CD4-positive, alpha-beta memory T cell (primary cell): ENCODE measurements at regions of chr9 and their contacts with region 1.

Region 1: DNA sequence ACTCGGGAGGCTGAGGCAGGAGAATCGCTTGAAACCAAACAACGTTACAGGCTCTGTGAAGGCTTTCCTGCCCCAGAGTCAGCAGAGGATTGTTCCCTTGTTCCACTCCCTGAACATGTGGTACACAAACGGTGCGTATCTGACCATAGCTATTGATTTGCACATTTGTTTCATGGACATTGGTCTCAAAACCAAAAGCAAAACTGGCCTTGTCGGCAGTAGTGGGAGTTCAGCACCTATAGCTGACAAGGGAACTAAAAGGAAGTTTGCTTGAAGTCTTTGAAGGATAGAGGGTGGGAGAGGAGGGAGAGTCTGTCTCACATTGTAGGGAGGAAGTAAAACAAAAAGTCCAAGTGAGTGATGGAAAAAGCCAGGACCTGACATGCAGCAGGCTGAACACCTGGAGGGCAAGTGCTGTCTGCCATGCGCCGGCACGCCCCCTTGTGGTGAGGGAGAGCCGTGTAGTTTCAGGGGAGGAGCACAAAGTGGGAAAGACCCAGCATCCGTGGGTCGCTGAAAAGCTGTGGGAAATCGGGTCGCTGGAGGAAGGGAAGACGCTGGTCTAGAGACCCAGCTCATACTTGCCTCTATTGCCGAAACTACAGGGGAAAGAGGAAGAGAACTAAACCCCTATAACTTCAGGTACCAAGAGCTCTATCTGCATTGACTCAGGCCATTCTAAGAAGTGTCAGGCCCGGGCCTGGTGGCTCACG is 58.0 kb downstream of the RAD23B start:
- DNase-seq: peak; percentile 71 to 75 (median 73)
- H3K4me3 ChIP-seq: no peak overlapping the region
- H3K4me3 Mint-ChIP-seq: peak overlapping the region in 2 of 8 donors; percentile 4 to 17
- H3K27ac ChIP-seq: no peak overlapping the region
- H3K27ac Mint-ChIP-seq: peak overlapping the region in 4 of 7 donors; percentile 30 to 89 (median 50)
- H3K4me1 ChIP-seq: peaks cover 10% of the 10 kb centered on the region
- H3K4me1 Mint-ChIP-seq: peaks cover 7 to 17% (median 14%) of the 10 kb centered on the region in 4 donors
- H3K27me3 ChIP-seq: no peaks in the 10 kb centered on the region
- H3K27me3 Mint-ChIP-seq: no peaks in the 10 kb centered on the region

Region 2: DNA sequence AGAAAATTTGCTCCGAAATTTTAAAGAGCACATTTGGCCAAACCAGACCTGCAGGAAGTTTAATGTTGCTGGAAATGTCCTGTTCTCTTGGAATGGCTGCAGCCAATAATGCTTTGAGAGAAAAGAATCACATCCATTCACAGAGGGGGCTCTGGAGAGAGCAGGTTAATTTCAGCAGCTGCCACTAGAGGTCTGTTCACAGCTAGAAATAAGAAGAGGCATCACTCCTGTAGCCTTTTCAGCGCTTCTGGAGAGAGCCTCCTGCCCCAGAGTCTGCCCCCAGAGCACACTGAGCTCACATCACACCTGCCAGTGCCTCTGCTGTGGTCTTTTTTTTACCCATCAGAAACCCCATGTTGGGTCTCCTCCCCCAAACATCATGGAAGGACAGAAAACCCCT is 182.8 kb before region 1 on chr9:
- CTCF ChIA-PET with region 1: interaction called, 8 read pairs
- POLR2A ChIA-PET with region 1: no interaction called
- intact Hi-C with region 1: loop called (anchors 5 kb)
- DNase-seq: no peak
- H3K4me3 ChIP-seq: no peak overlapping the region
- H3K4me3 Mint-ChIP-seq: no peak overlapping the region
- H3K27ac ChIP-seq: no peak overlapping the region
- H3K27ac Mint-ChIP-seq: no peak overlapping the region
- H3K4me1 ChIP-seq: no peaks in the 10 kb centered on the region
- H3K4me1 Mint-ChIP-seq: no peaks in the 10 kb centered on the region
- H3K27me3 ChIP-seq: no peaks in the 10 kb centered on the region
- H3K27me3 Mint-ChIP-seq: peaks cover 4% of the 10 kb centered on the region in 2 donors

Region 3: DNA sequence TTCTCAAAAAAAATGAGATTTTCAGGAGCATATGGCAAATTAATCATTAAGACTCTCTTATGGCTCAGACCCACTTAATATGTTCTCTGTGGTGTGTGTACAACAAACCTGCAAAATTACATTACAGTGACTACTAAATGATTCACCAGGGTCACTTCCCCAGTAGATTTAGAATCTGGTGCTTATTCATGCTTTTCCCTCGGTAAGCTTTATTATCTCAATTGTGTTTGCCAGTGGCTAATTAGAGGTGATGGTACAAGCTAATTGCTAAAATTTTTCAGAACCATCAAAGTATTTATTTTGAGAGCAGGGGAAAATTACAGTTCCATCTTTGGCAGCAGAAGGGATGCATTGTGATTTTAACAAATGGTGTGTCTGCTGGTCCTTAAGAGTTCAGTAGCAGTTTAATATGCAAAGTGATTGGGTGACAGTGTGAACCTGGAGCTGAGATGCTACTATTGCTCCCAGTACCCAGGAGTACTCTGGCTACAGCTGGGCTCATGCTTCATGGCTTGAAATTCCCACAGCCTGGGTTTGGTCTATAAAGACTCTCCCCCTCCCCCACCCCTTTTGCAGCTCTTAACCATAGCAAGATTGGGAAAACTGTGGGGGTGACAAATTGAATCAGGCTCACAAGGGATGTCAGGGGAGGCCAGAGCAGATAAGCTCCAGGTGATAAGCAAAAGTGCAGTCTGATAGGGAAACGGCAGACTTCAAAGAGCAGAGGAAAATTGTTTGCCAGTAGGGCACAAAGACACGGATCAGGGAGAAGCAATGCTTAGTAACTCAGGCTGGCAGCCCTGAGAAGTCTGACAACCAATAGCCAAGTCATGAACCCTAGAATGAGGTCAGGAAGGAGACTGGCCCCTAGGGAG is 150.8 kb before region 1 on chr9:
- CTCF ChIA-PET with region 1: interaction called, 11 read pairs
- POLR2A ChIA-PET with region 1: no interaction called
- intact Hi-C with region 1: no loop called
- DNase-seq: no peak
- H3K4me3 ChIP-seq: no peak overlapping the region
- H3K4me3 Mint-ChIP-seq: no peak overlapping the region
- H3K27ac ChIP-seq: no peak overlapping the region
- H3K27ac Mint-ChIP-seq: no peak overlapping the region
- H3K4me1 ChIP-seq: no peaks in the 10 kb centered on the region
- H3K4me1 Mint-ChIP-seq: no peaks in the 10 kb centered on the region
- H3K27me3 ChIP-seq: no peaks in the 10 kb centered on the region
- H3K27me3 Mint-ChIP-seq: peaks cover 4 to 14% of the 10 kb centered on the region in 2 donors

Region 4: DNA sequence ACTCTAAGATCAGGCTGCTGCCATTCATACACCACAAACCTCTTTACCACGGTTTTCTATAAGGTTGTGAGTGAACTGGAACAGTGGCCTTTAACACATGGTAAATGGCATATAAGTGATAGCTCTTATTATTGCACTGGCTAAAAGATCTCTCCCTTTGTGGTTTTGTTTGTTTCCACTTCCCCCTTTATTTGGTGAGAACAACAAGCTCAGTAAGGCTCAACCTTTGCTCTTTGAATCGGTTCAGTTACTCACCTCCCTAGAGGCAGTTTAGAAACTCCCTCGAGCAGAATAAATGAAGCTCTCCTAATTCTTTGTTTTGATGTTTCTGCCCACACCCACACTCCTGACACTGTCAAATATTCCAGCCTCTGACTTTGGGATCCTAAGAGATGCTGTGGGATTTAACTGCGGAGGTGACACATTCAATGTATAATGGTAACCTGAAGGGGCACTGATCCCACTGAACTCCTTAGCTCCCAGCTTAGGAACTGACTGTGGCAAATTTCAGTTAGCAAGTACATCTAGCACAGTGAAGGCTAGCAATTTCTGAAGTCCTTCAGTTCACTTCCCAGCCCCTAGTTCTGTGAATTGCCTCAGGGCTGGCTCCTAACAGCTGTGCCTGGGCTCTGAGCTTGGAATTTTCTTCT is 80.5 kb before region 1 on chr9:
- CTCF ChIA-PET with region 1: interaction called, 13 read pairs
- POLR2A ChIA-PET with region 1: no interaction called
- intact Hi-C with region 1: no loop called
- DNase-seq: no peak
- H3K4me3 ChIP-seq: no peak overlapping the region
- H3K4me3 Mint-ChIP-seq: no peak overlapping the region
- H3K27ac ChIP-seq: no peak overlapping the region
- H3K27ac Mint-ChIP-seq: peak overlapping the region in 1 of 7 donors; percentile 20
- H3K4me1 ChIP-seq: no peaks in the 10 kb centered on the region
- H3K4me1 Mint-ChIP-seq: no peaks in the 10 kb centered on the region
- H3K27me3 ChIP-seq: peaks cover 5% of the 10 kb centered on the region
- H3K27me3 Mint-ChIP-seq: peaks cover 6 to 11% of the 10 kb centered on the region in 2 donors

Region 5: DNA sequence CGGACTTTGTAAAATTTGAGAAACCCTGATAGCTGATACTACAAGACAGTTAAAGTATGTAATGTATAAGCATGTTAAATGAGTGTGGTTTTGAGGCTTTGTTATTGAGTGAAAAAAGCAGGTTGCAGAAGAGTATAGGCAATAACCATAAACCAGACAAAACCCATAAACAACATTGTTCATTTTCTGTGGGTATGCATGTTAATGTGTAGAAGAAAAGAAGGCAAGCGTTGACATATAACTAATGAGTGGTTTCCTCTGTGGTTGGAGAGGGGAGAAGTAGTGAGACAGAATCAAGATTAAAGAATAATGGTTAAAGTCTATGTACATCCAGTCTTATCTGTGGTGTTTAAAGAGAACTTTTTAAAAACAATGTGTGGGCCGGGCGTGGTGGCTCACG is 31.8 kb before region 1 on chr9:
- CTCF ChIA-PET with region 1: interaction called, 20 read pairs
- POLR2A ChIA-PET with region 1: no interaction called
- intact Hi-C with region 1: no loop called
- DNase-seq: peak in 4 of 5 donors; percentile 24 to 43 (median 34)
- H3K4me3 ChIP-seq: no peak overlapping the region
- H3K4me3 Mint-ChIP-seq: peak overlapping the region in 7 of 8 donors; percentile 23 to 74 (median 45)
- H3K27ac ChIP-seq: no peak overlapping the region
- H3K27ac Mint-ChIP-seq: peak overlapping the region in 6 of 7 donors; percentile 20 to 87 (median 52)
- H3K4me1 ChIP-seq: peaks cover 35% of the 10 kb centered on the region
- H3K4me1 Mint-ChIP-seq: peaks cover 46 to 78% (median 62%) of the 10 kb centered on the region in 4 donors
- H3K27me3 ChIP-seq: no peaks in the 10 kb centered on the region
- H3K27me3 Mint-ChIP-seq: no peaks in the 10 kb centered on the region

Region 6: DNA sequence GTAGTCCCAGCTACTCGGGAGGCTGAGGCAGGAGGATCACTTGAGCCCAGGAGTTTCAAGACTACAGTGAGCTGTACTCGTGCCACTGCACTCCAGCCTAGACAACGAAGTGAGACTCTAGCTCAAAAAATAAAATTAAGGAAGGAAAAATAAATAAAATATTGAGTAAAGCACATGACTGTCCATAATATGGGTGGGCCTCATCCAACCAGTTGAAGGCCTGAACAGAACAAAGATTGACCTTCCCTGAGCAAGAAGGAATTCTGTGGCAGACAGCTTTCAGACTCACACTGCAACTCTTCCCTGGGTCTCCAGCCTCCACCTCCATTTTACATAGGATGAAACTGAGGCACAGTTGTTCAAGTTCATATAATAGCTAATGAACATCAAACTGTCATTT is 14.3 kb after region 1 on chr9:
- CTCF ChIA-PET with region 1: interaction called, 20 read pairs
- POLR2A ChIA-PET with region 1: no interaction called
- intact Hi-C with region 1: no loop called
- DNase-seq: no peak
- H3K4me3 ChIP-seq: no peak overlapping the region
- H3K4me3 Mint-ChIP-seq: no peak overlapping the region
- H3K27ac ChIP-seq: no peak overlapping the region
- H3K27ac Mint-ChIP-seq: no peak overlapping the region
- H3K4me1 ChIP-seq: no peaks in the 10 kb centered on the region
- H3K4me1 Mint-ChIP-seq: no peaks in the 10 kb centered on the region
- H3K27me3 ChIP-seq: no peaks in the 10 kb centered on the region
- H3K27me3 Mint-ChIP-seq: peaks cover 6 to 14% of the 10 kb centered on the region in 2 donors